Common myeloid progenitor, CD34-positive (primary cell): ENCODE measurements at regions of chr17 and their contacts with region 1.

Region 1: GRCh38 chr17:37650419-37651003 is 7.3 kb upstream of the DDX52 start:
- DNase-seq: peak in 2 of 3 donors; percentile 19 to 21
- H3K4me3 ChIP-seq: no peak overlapping the region
- H3K27ac ChIP-seq: no peak overlapping the region
- H3K4me1 ChIP-seq: no peaks in the 10 kb centered on the region
- H3K27me3 ChIP-seq: peaks cover 10 to 46% (median 17%) of the 10 kb centered on the region in 5 experiments

Region 2: DNA sequence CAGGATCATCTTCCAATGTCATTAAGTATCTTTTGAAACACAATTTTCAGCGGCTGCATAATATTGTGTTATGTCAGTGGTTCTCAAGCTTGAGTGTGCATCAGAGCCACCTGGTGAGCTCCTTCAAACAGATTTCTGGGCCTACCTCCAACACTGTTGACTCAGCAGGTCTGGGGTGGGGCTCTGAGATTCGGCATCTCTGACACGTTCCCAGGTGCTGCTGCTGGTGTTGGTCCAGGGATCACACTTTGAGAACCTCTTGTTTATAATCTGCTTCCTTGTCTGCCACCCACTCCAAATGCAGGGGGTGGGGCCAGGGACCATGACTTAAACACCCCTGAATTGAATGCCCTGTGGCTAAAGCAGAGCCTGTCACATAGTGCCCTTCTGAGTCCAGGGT is 168.2 kb after region 1 on chr17:
- CTCF ChIA-PET with region 1: interaction called, 13 read pairs
- POLR2A ChIA-PET with region 1: interaction called, 8 read pairs
- DNase-seq: peak in 2 of 3 donors; percentile 42 to 48
- H3K4me3 ChIP-seq: no peak overlapping the region
- H3K27ac ChIP-seq: no peak overlapping the region
- H3K4me1 ChIP-seq: peaks cover 16 to 37% (median 29%) of the 10 kb centered on the region in 4 experiments
- H3K27me3 ChIP-seq: no peaks in the 10 kb centered on the region